Sigmoid colon (tissue), 7 donors: ENCODE measurements at regions of chr2 and their contacts with region 1.

Region 1: GRCh38 chr2:205885492-205886099 is 200.4 kb downstream of the INO80D start:
- DNase-seq: peak; percentile 95
- H3K4me3 ChIP-seq: no peak overlapping the region
- H3K27ac ChIP-seq: peak overlapping the region in 3 of 4 donors; percentile 70 to 80 (median 72)
- H3K4me1 ChIP-seq: peaks cover 0 to 34% (median 18%) of the 10 kb centered on the region in 4 donors
- H3K27me3 ChIP-seq: no peaks in the 10 kb centered on the region
- CTCF ChIP-seq: peak; percentile 91 to 98 (median 94)
- EP300 ChIP-seq: no peak
- POLR2A ChIP-seq: no peak

Region 2: DNA sequence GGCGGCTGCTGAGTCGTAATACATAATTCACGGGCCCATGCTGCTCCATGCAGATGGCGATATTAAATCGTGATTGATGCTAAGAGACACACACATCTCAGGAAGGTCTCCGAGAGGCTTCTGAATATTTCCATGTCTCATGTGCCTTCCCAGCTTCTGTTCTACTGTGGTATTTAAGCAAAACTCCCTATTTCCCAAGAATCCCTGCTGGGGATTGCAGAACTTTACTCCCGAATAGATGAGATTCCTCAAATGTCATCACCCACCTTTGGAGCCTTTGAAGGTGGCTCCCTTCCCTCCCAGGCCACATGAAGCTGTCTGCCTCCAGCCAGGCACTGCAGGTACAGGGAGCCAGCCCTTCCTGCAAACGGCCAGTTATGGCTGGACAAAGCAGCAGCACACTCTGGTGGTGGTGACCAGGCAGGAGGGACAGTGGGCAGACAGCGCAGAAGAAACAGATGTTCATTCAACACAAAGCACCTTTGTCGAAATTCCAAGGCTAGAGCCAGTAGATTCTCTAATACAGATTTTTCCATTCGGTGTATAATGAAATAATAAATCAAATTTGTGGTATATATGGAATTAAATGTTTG is 189.2 kb before region 1 on chr2:
- intact Hi-C with region 1: loop called (anchors 5 kb)
- DNase-seq: peak; percentile 82
- H3K4me3 ChIP-seq: peak overlapping the region in 2 of 4 donors; percentile 8 to 12
- H3K27ac ChIP-seq: peak overlapping the region; percentile 94 to 99 (median 96)
- H3K4me1 ChIP-seq: peaks cover 0 to 100% (median 99%) of the 10 kb centered on the region in 4 donors
- H3K27me3 ChIP-seq: no peaks in the 10 kb centered on the region
- CTCF ChIP-seq: peak in 3 of 4 experiments; percentile 21 to 39 (median 29)
- EP300 ChIP-seq: no peak
- POLR2A ChIP-seq: peak in 1 of 2 donors; percentile 2

Region 3: DNA sequence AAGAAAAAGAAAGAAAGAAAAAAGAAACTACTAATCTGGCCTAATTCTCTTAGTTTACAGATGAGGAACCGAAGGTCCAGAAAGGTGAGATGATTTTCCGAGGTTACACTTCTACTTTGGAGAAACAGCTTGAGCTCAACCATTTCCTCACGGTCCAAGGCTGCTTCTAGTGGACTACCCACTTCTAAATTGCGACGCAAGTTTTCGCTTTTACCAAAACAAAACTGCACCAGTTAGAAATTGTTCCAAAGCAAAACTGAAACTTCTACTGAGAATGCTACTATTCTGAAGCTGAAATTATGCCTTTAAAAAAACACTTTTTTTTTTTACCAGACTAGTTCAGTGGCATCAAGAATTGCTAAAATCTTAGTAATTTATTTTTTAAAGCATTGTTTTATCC is 98.8 kb after region 1 on chr2:
- intact Hi-C with region 1: no loop called
- DNase-seq: no peak
- H3K4me3 ChIP-seq: no peak overlapping the region
- H3K27ac ChIP-seq: no peak overlapping the region
- H3K4me1 ChIP-seq: no peaks in the 10 kb centered on the region
- H3K27me3 ChIP-seq: no peaks in the 10 kb centered on the region
- CTCF ChIP-seq: no peak
- EP300 ChIP-seq: no peak
- POLR2A ChIP-seq: no peak

Region 4: DNA sequence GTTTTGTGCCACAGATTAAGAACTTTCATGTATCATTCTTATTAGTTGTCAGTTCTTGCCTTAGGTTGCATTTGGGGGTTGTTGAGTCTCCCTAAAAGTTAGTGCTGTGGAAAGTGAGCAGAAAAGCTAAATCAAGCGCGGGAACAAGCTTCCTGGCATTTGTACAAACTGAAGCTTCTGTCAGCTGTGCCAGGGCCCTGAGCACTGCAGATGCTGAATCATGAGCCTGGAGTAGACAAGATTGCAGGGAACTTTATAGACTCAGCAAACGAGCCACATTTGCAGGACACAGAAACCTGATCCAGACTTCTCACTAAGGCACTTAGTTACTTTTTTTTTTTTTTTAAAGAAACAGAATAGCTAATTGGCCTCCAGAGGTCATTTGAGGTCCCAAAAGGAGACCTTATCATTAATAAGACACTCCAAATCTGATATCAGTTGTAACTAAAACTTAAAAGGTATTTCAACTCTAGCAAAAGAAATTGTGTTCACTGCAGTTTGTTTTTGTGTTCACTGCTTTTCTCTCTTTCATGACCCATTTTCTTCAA is 646.5 kb after region 1 on chr2:
- intact Hi-C with region 1: no loop called
- DNase-seq: no peak
- H3K4me3 ChIP-seq: no peak overlapping the region
- H3K27ac ChIP-seq: no peak overlapping the region
- H3K4me1 ChIP-seq: peaks cover 0 to 6% (median 2%) of the 10 kb centered on the region in 4 donors
- H3K27me3 ChIP-seq: no peaks in the 10 kb centered on the region
- CTCF ChIP-seq: no peak
- EP300 ChIP-seq: no peak
- POLR2A ChIP-seq: no peak